Caco-2 (cell line): ENCODE measurements at regions of chr4 and their contacts with region 1.

Region 1: GRCh38 chr4:153083447-153083947 is 120.7 kb upstream of the TRIM2 start:
- DNase-seq: peak; percentile 72
- H3K4me3 ChIP-seq: no peak overlapping the region
- H3K4me3 Mint-ChIP-seq: no peak overlapping the region
- H3K27ac Mint-ChIP-seq: peak overlapping the region; percentile 79
- H3K4me1 ChIP-seq: peaks cover 14% of the 10 kb centered on the region; the same call in 1 of the 2 replicates
- H3K4me1 Mint-ChIP-seq: peaks cover 15% of the 10 kb centered on the region
- H3K27me3 ChIP-seq: no peaks in the 10 kb centered on the region
- H3K27me3 Mint-ChIP-seq: no peaks in the 10 kb centered on the region
- CTCF ChIP-seq: peak; percentile 41 to 60

Region 2: GRCh38 chr4:152850377-152850776 is 233.1 kb before region 1 on chr4:
- CTCF ChIA-PET with region 1: interaction called, 4 read pairs
- POLR2A ChIA-PET with region 1: no interaction called
- intact Hi-C with region 1: loop called (anchors 1 kb)
- DNase-seq: no peak
- H3K4me3 ChIP-seq: no peak overlapping the region
- H3K4me3 Mint-ChIP-seq: no peak overlapping the region
- H3K27ac Mint-ChIP-seq: no peak overlapping the region
- H3K4me1 ChIP-seq: no peaks in the 10 kb centered on the region
- H3K4me1 Mint-ChIP-seq: no peaks in the 10 kb centered on the region
- H3K27me3 ChIP-seq: no peaks in the 10 kb centered on the region
- H3K27me3 Mint-ChIP-seq: no peaks in the 10 kb centered on the region
- CTCF ChIP-seq: no peak

Region 3: DNA sequence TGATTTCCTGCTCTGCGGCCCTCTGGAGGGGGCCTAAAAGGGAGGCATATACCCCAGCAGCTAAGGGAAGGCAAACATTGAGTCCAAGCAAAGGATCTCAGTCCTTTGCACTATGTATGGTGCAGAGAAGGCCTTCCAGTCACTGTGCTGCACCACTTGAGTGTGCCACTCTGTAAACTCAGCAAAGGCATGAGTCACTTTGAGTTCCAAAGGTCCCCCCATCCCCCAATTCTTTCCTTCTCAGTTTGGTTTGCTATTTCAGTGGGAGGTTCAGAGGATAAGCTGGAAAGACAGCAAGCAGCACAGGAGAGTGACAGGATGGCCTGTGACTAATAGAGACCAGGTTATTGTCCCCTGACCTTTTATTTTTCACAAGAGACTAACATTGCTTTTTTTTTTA is 16.1 kb before region 1 on chr4:
- CTCF ChIA-PET with region 1: interaction called, 5 read pairs
- POLR2A ChIA-PET with region 1: no interaction called
- intact Hi-C with region 1: loop called (anchors 1 kb)
- DNase-seq: peak; percentile 73 to 74
- H3K4me3 ChIP-seq: no peak overlapping the region
- H3K4me3 Mint-ChIP-seq: no peak overlapping the region
- H3K27ac Mint-ChIP-seq: peak overlapping the region; percentile 88
- H3K4me1 ChIP-seq: peaks cover 38% of the 10 kb centered on the region
- H3K4me1 Mint-ChIP-seq: peaks cover 20% of the 10 kb centered on the region
- H3K27me3 ChIP-seq: no peaks in the 10 kb centered on the region
- H3K27me3 Mint-ChIP-seq: no peaks in the 10 kb centered on the region
- CTCF ChIP-seq: no peak

Region 4: GRCh38 chr4:153127760-153128494 is 44.4 kb after region 1 on chr4:
- CTCF ChIA-PET with region 1: interaction called, 143 read pairs
- POLR2A ChIA-PET with region 1: no interaction called
- intact Hi-C with region 1: loop called (anchors 1 kb)
- DNase-seq: peak; percentile 77 to 86
- H3K4me3 ChIP-seq: no peak overlapping the region
- H3K4me3 Mint-ChIP-seq: peak overlapping the region; percentile 49
- H3K27ac Mint-ChIP-seq: no peak overlapping the region
- H3K4me1 ChIP-seq: peaks cover 15% of the 10 kb centered on the region
- H3K4me1 Mint-ChIP-seq: peaks cover 7% of the 10 kb centered on the region
- H3K27me3 ChIP-seq: no peaks in the 10 kb centered on the region
- H3K27me3 Mint-ChIP-seq: no peaks in the 10 kb centered on the region
- CTCF ChIP-seq: peak; percentile 74 to 82

Region 5: DNA sequence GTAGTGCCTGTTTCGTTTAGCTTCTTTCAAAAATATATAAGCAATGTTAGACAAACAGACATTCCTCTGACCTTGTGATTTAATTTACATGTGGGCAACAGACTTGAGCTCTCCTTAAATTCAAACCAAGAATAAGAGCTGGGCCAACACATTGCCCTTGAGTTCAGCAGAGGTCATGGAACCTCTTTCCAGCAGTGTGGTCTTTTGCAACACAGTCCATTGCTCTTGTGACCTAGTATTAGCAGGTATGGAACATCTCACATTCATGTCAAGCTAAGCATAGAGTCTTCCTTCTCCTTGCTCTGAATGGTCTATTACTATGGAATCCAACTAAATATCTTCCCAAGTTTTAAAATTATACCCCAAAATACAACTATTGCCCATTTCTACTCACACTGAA is 227.3 kb after region 1 on chr4:
- CTCF ChIA-PET with region 1: no interaction called
- POLR2A ChIA-PET with region 1: no interaction called
- intact Hi-C with region 1: no loop called
- DNase-seq: no peak
- H3K4me3 ChIP-seq: no peak overlapping the region
- H3K4me3 Mint-ChIP-seq: no peak overlapping the region
- H3K27ac Mint-ChIP-seq: no peak overlapping the region
- H3K4me1 ChIP-seq: no peaks in the 10 kb centered on the region
- H3K4me1 Mint-ChIP-seq: no peaks in the 10 kb centered on the region
- H3K27me3 ChIP-seq: no peaks in the 10 kb centered on the region
- H3K27me3 Mint-ChIP-seq: no peaks in the 10 kb centered on the region
- CTCF ChIP-seq: no peak